Endothelial cell of umbilical vein (primary cell): ENCODE measurements at regions of chr2 and their contacts with region 1.

Region 1: GRCh38 chr2:210195101-210195852 is 24.1 kb upstream of the KANSL1L start:
- DNase-seq: peak; percentile 65
- H3K4me3 ChIP-seq: peak overlapping the region; percentile 13 to 76 (median 45)
- H3K27ac ChIP-seq: no peak overlapping the region
- H3K4me1 ChIP-seq: peaks cover 14% of the 10 kb centered on the region
- H3K27me3 ChIP-seq: peaks cover 0 to 3% of the 10 kb centered on the region in 2 experiments
- CTCF ChIP-seq: peak; percentile 31 to 45
- POLR2A ChIP-seq: no peak

Region 2: GRCh38 chr2:209334198-209335017 is 860.9 kb before region 1 on chr2:
- CTCF ChIA-PET with region 1: interaction called, 16 read pairs
- POLR2A ChIA-PET with region 1: no interaction called
- dilution Hi-C with region 1: no loop called
- intact Hi-C with region 1: loop called (anchors 2 kb)
- DNase-seq: peak; percentile 69
- H3K4me3 ChIP-seq: no peak overlapping the region
- H3K27ac ChIP-seq: no peak overlapping the region
- H3K4me1 ChIP-seq: no peaks in the 10 kb centered on the region
- H3K27me3 ChIP-seq: peaks cover 1 to 2% of the 10 kb centered on the region in 2 experiments
- CTCF ChIP-seq: peak; percentile 73 to 78
- POLR2A ChIP-seq: no peak

Region 3: GRCh38 chr2:209790066-209790728 is 405.1 kb before region 1 on chr2:
- CTCF ChIA-PET with region 1: interaction called, 7 read pairs
- POLR2A ChIA-PET with region 1: no interaction called
- dilution Hi-C with region 1: no loop called
- intact Hi-C with region 1: loop called (anchors 10 kb)
- DNase-seq: no peak
- H3K4me3 ChIP-seq: no peak overlapping the region
- H3K27ac ChIP-seq: no peak overlapping the region
- H3K4me1 ChIP-seq: no peaks in the 10 kb centered on the region
- H3K27me3 ChIP-seq: no peaks in the 10 kb centered on the region
- CTCF ChIP-seq: no peak
- POLR2A ChIP-seq: no peak

Region 4: DNA sequence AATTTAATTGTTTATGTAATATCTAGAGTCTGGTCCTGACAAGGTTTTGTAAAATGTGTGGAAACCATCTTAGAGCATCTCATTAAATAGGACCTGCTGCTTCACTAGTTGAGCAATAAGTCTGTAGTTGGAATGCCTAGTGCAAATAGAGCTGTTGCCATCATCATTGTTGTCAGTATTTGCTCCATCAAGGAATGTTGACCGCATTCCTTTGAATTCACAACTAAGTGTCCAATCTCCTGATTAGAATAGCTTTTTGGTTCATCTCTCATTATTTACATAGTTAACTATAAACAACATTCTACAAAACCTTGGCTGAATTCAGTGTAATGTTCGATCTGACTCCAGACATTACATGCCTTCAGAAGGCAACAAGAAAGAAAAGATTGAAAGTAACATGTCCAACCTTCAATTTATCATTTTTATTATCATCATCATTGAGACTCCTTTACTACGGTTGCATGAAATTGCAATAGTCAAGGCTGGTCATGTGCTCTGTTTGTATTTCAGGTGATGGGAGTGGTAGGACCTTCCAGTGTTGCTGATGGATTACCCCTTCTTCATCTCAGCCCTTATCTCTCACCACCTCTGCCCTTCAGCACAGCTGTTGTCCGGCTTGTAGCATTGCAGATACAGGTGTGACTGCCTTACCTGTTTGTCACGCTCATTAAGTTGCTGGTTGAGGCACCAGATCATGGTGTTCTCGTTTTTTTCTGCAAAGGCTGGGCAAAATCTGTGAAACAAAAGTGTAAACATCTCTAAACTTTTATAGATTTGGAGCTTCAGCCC is 224.8 kb before region 1 on chr2:
- CTCF ChIA-PET with region 1: interaction called, 169 read pairs
- POLR2A ChIA-PET with region 1: no interaction called
- dilution Hi-C with region 1: no loop called
- intact Hi-C with region 1: no loop called
- DNase-seq: no peak
- H3K4me3 ChIP-seq: no peak overlapping the region
- H3K27ac ChIP-seq: no peak overlapping the region
- H3K4me1 ChIP-seq: no peaks in the 10 kb centered on the region
- H3K27me3 ChIP-seq: peaks cover 5 to 13% of the 10 kb centered on the region in 2 experiments
- CTCF ChIP-seq: no peak
- POLR2A ChIP-seq: no peak

Region 5: DNA sequence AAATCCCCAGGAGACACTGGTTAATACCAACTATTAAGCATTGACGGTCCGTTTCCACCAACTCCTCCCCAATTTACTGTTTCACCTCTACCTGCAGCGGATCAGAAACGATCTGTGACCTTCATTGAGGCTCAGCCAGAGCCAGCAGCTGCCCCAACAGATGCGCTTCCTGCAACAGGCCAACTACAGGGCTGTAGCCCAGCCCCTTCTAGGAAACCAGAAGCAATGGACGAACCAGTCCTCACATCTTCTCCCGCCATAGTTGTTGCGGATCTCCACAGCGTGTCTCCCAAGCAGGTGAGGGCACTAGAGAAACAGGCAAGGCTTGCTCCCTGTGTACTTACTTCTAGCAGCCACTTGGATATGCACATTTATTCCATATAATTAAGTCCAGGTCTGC is 201.3 kb before region 1 on chr2:
- CTCF ChIA-PET with region 1: interaction called, 18 read pairs
- POLR2A ChIA-PET with region 1: no interaction called
- dilution Hi-C with region 1: no loop called
- intact Hi-C with region 1: no loop called
- DNase-seq: no peak
- H3K4me3 ChIP-seq: no peak overlapping the region
- H3K27ac ChIP-seq: no peak overlapping the region
- H3K4me1 ChIP-seq: peaks cover 10% of the 10 kb centered on the region
- H3K27me3 ChIP-seq: peaks cover 0 to 2% of the 10 kb centered on the region in 2 experiments
- CTCF ChIP-seq: no peak
- POLR2A ChIP-seq: no peak

Region 6: GRCh38 chr2:210210185-210210584 is 14.9 kb after region 1 on chr2:
- CTCF ChIA-PET with region 1: interaction called, 16 read pairs
- POLR2A ChIA-PET with region 1: no interaction called
- dilution Hi-C with region 1: no loop called
- intact Hi-C with region 1: no loop called
- DNase-seq: no peak
- H3K4me3 ChIP-seq: no peak overlapping the region
- H3K27ac ChIP-seq: no peak overlapping the region
- H3K4me1 ChIP-seq: no peaks in the 10 kb centered on the region
- H3K27me3 ChIP-seq: peaks cover 3 to 5% of the 10 kb centered on the region in 2 experiments
- CTCF ChIP-seq: no peak
- POLR2A ChIP-seq: no peak

Region 7: DNA sequence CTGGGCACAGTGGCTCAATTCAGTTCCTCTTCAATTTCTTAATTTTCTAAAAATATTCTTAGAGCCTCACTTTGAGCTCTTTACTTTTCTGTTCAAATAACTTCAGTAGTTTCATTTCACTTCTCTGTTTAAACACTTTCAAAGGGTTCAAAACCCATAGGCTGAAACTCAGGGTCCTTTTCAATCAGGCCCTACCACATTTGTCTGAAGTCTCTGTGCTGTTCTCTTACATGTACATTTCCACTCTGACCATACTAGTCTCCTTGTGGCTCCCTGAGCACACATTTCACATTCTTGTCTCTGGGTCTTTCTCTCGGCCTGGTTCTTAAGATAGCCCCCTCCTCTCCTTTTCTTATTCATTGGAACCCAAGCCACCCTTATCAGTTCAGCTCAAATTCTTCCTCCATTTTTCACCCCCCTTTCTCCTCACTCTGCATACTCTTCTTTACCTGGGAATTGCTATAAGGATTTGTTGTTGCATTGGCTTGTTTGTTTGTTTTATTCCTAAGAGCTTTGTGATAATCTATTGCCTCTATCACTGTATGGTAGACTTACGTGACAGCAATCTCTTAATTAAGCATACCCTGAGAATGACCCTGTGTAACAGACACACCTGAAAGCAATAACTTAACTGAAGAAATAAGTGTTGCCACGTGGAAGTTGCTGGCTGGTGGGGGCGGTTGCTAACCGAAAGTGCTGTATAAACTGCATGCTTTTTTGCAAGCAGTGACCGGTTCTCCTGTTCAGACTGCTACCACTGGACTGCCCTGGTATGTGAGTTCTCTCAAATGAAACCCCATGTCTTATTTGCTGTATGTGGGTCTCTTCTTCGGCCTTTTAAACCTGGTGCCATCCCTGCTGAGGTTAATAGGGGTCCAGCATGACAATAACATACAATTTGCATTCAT is 57.7 kb after region 1 on chr2:
- CTCF ChIA-PET with region 1: no interaction called
- POLR2A ChIA-PET with region 1: no interaction called
- dilution Hi-C with region 1: no loop called
- intact Hi-C with region 1: no loop called
- DNase-seq: no peak
- H3K4me3 ChIP-seq: no peak overlapping the region
- H3K27ac ChIP-seq: no peak overlapping the region
- H3K4me1 ChIP-seq: no peaks in the 10 kb centered on the region
- H3K27me3 ChIP-seq: no peaks in the 10 kb centered on the region
- CTCF ChIP-seq: no peak
- POLR2A ChIP-seq: no peak